ENCODE measurements at regions of chr7 and their contacts with region 1.

Region 1: GRCh38 chr7:98168181-98168905 is 42.9 kb upstream of the BHLHA15 start:
- DNase-seq: peak; percentile 61
- ATAC-seq: peak; percentile 56
- H3K4me3 Mint-ChIP-seq: no peak overlapping the region
- H3K27ac Mint-ChIP-seq: no peak overlapping the region
- H3K4me1 Mint-ChIP-seq: peaks cover 6% of the 10 kb centered on the region
- H3K27me3 Mint-ChIP-seq: no peaks in the 10 kb centered on the region

Region 2: GRCh38 chr7:98014352-98014751 is 154.0 kb before region 1 on chr7:
- CTCF ChIA-PET with region 1: interaction called, 162 read pairs
- POLR2A ChIA-PET with region 1: no interaction called
- DNase-seq: no peak
- ATAC-seq: no peak
- H3K4me3 Mint-ChIP-seq: no peak overlapping the region
- H3K27ac Mint-ChIP-seq: no peak overlapping the region
- H3K4me1 Mint-ChIP-seq: no peaks in the 10 kb centered on the region
- H3K27me3 Mint-ChIP-seq: peaks cover 2% of the 10 kb centered on the region

Region 3: GRCh38 chr7:98021588-98022351 is 146.6 kb before region 1 on chr7:
- CTCF ChIA-PET with region 1: interaction called, 162 read pairs
- POLR2A ChIA-PET with region 1: no interaction called
- DNase-seq: peak; percentile 83
- ATAC-seq: peak; percentile 94
- H3K4me3 Mint-ChIP-seq: no peak overlapping the region
- H3K27ac Mint-ChIP-seq: no peak overlapping the region
- H3K4me1 Mint-ChIP-seq: no peaks in the 10 kb centered on the region
- H3K27me3 Mint-ChIP-seq: peaks cover 4% of the 10 kb centered on the region

Region 4: GRCh38 chr7:98106647-98107445 is 61.5 kb before region 1 on chr7 and contains the start of gene LMTK2:
- CTCF ChIA-PET with region 1: interaction called, 24 read pairs
- POLR2A ChIA-PET with region 1: interaction called, 5 read pairs
- DNase-seq: peak; percentile 95
- ATAC-seq: peak; percentile 100
- H3K4me3 Mint-ChIP-seq: peak within 1 kb of the TSS; percentile 95
- H3K27ac Mint-ChIP-seq: peak within 1 kb of the TSS; percentile 94
- H3K4me1 Mint-ChIP-seq: peaks cover 15% of the 10 kb centered on the region
- H3K27me3 Mint-ChIP-seq: no peaks in the 10 kb centered on the region
- total RNA-seq, gene LMTK2: 10.2 TPM

Region 5: DNA sequence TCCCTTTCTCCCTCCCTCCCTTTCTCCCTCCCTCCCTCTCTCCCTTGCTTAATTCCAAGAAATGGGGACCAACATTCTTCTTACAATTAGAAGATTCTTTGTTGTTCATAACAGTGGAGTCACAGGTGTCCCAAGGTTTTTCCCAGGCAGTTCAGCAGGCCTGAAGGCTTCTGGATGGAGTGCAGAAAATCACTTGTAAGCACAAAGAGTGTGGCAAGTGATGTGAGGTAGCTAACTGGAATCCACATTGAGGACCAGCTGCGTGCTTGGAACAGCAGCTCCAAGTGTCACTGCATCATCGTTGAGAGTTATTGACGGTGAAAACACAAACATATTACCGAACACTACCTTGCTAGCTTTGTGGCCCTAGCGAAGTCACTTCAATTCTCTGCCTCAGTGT is 11.3 kb after region 1 on chr7:
- CTCF ChIA-PET with region 1: interaction called, 11 read pairs
- POLR2A ChIA-PET with region 1: no interaction called
- DNase-seq: no peak
- ATAC-seq: no peak
- H3K4me3 Mint-ChIP-seq: no peak overlapping the region
- H3K27ac Mint-ChIP-seq: no peak overlapping the region
- H3K4me1 Mint-ChIP-seq: no peaks in the 10 kb centered on the region
- H3K27me3 Mint-ChIP-seq: no peaks in the 10 kb centered on the region